K562 (cell line): ENCODE measurements at regions of chr7 and their contacts with region 1.

Region 1: GRCh38 chr7:23712368-23713284 is 2.6 kb downstream of the STK31 start:
- DNase-seq: peak; percentile 44 to 62 (median 52)
- ATAC-seq: peak; percentile 58; the same call in 2 of the 3 replicates
- H3K4me3 ChIP-seq: no peak overlapping the region
- H3K27ac ChIP-seq: no peak overlapping the region
- H3K4me1 ChIP-seq: no peaks in the 10 kb centered on the region
- H3K27me3 ChIP-seq: peaks cover 0 to 6% of the 10 kb centered on the region in 2 experiments; a peak in 2 of 5 replicates
- CTCF ChIP-seq: peak; percentile 42 to 82 (median 58); a peak in 4 of 6 replicates
- EP300 ChIP-seq: no peak
- POLR2A ChIP-seq: no peak
- RAD21 ChIP-seq: peak; percentile 92 to 94

Region 2: DNA sequence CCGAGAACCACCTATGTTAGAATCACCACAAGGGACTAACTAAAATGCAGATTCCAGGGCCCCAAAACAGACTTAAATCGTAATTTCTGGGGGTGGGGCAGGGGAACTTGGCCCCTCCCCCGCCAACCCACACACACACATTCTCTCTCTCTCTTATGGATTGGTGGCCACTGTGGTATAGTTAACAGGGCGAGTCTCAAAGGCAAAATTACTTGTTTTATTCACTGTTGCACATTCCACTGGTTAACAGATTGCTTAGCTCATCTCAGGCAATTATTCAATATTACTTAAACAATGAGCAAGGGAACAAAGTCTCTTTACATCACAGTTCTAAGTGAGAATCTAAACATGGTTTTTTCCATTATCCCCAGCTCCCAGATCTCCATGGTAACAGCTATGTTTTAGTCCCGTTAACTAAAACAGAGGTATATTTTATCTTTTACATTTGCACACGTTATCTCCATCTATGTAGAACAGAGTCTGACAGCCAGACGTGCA is 280.9 kb before region 1 on chr7:
- CTCF ChIA-PET with region 1: no interaction called
- POLR2A ChIA-PET with region 1: no interaction called
- in situ Hi-C with region 1: no loop called
- intact Hi-C with region 1: loop called (anchors 10 kb)
- DNase-seq: peak; percentile 41 to 56 (median 52)
- ATAC-seq: peak; percentile 62
- H3K4me3 ChIP-seq: no peak overlapping the region
- H3K27ac ChIP-seq: peak overlapping the region; percentile 41; the same call in 1 of the 3 replicates
- H3K4me1 ChIP-seq: peaks cover 11 to 48% of the 10 kb centered on the region in 2 experiments; a peak in 4 of 5 replicates
- H3K27me3 ChIP-seq: no peaks in the 10 kb centered on the region
- CTCF ChIP-seq: no peak
- EP300 ChIP-seq: peak; percentile 16; the same call in 1 of the 2 replicates
- POLR2A ChIP-seq: no peak
- RAD21 ChIP-seq: no peak

Region 3: DNA sequence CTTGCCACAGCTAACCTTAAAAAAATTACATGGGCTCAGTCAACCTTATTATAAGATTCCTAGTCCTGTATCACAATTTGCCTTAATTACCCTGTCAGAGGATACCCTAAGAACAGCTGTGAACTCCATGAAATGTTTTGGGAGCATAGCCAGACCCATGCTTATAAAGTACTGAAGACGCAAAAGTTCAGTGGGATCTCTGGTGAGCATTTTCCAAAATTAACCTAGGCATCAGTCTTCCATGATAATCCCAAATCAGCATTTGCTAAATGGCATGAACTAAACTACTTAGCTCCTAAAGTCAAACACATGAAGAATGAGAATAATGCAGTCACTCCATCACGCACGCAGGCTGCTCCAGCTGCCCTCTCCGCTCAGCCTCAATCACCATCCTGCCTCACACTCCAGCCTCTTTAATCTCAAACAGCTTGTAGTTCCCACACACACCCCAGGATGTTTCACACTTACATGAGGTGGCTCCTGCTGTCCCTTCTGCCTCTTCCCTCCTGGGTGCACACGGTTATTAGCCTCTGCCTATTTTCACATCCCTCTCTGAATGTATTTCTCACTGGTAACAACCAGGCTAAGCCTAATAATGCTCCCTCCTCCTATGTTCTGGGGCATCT is 257.6 kb before region 1 on chr7:
- CTCF ChIA-PET with region 1: no interaction called
- POLR2A ChIA-PET with region 1: no interaction called
- in situ Hi-C with region 1: no loop called
- intact Hi-C with region 1: no loop called
- DNase-seq: no peak
- ATAC-seq: peak; percentile 39
- H3K4me3 ChIP-seq: no peak overlapping the region
- H3K27ac ChIP-seq: no peak overlapping the region
- H3K4me1 ChIP-seq: peaks cover 0 to 2% of the 10 kb centered on the region in 2 experiments; a peak in 1 of 5 replicates
- H3K27me3 ChIP-seq: no peaks in the 10 kb centered on the region
- CTCF ChIP-seq: no peak
- EP300 ChIP-seq: no peak
- POLR2A ChIP-seq: peak; percentile 42; the same call in 1 of the 2 replicates
- RAD21 ChIP-seq: no peak

Region 4: GRCh38 chr7:23546897-23547572 is 165.6 kb before region 1 on chr7:
- CTCF ChIA-PET with region 1: interaction called, 73 read pairs
- POLR2A ChIA-PET with region 1: no interaction called
- in situ Hi-C with region 1: no loop called
- intact Hi-C with region 1: loop called (anchors 1 kb)
- DNase-seq: peak; percentile 81 to 93 (median 82)
- ATAC-seq: peak; percentile 87
- H3K4me3 ChIP-seq: no peak overlapping the region
- H3K27ac ChIP-seq: no peak overlapping the region
- H3K4me1 ChIP-seq: peaks cover 0 to 6% of the 10 kb centered on the region in 2 experiments; a peak in 2 of 5 replicates
- H3K27me3 ChIP-seq: no peaks in the 10 kb centered on the region; a peak in 1 of 5 replicates
- CTCF ChIP-seq: peak; percentile 94 to 99 (median 98)
- EP300 ChIP-seq: no peak
- POLR2A ChIP-seq: no peak
- RAD21 ChIP-seq: peak; percentile 94

Region 5: GRCh38 chr7:23570592-23571200 is 141.9 kb before region 1 on chr7:
- CTCF ChIA-PET with region 1: interaction called, 39 read pairs
- POLR2A ChIA-PET with region 1: interaction called, 3 read pairs
- in situ Hi-C with region 1: loop called (anchors 5 kb)
- intact Hi-C with region 1: loop called (anchors 1 kb)
- DNase-seq: peak; percentile 62 to 86 (median 69)
- ATAC-seq: peak; percentile 98
- H3K4me3 ChIP-seq: no peak overlapping the region
- H3K27ac ChIP-seq: no peak overlapping the region
- H3K4me1 ChIP-seq: peaks cover 0 to 5% of the 10 kb centered on the region in 2 experiments; a peak in 2 of 5 replicates
- H3K27me3 ChIP-seq: no peaks in the 10 kb centered on the region
- CTCF ChIP-seq: peak; percentile 82 to 91 (median 87)
- EP300 ChIP-seq: no peak
- POLR2A ChIP-seq: no peak
- RAD21 ChIP-seq: peak; percentile 96 to 98

Region 6: DNA sequence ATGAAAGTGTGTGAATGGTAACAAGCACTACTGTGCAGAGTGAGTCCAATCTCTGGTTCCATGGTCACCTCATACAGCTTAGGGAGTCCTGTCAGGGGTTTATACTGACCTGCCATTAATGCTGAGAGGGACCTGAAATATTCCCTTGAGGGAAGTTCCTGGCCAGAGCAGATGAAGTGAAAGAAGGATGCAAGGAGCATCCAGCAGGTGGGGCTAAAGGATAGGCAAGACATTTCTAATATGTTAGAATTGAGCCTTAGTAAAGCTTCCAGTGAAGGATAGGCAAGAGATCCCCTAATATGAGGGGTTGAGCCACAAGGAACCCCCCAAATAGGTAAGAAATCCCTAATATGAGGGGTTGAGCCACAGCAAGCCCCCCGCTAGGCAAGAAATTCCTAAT is 58.1 kb before region 1 on chr7:
- CTCF ChIA-PET with region 1: no interaction called
- POLR2A ChIA-PET with region 1: no interaction called
- in situ Hi-C with region 1: no loop called
- intact Hi-C with region 1: loop called (anchors 5 kb)
- DNase-seq: peak; percentile 16 to 57 (median 25)
- ATAC-seq: peak; percentile 69
- H3K4me3 ChIP-seq: no peak overlapping the region
- H3K27ac ChIP-seq: no peak overlapping the region
- H3K4me1 ChIP-seq: peaks cover 0 to 2% of the 10 kb centered on the region in 2 experiments; a peak in 1 of 5 replicates
- H3K27me3 ChIP-seq: peaks cover 0 to 4% of the 10 kb centered on the region in 2 experiments; a peak in 1 of 5 replicates
- CTCF ChIP-seq: peak; percentile 43 to 64 (median 61); a peak in 5 of 6 replicates
- EP300 ChIP-seq: no peak
- POLR2A ChIP-seq: no peak
- RAD21 ChIP-seq: peak; percentile 8 to 66; a peak in 2 of 4 replicates

Region 7: DNA sequence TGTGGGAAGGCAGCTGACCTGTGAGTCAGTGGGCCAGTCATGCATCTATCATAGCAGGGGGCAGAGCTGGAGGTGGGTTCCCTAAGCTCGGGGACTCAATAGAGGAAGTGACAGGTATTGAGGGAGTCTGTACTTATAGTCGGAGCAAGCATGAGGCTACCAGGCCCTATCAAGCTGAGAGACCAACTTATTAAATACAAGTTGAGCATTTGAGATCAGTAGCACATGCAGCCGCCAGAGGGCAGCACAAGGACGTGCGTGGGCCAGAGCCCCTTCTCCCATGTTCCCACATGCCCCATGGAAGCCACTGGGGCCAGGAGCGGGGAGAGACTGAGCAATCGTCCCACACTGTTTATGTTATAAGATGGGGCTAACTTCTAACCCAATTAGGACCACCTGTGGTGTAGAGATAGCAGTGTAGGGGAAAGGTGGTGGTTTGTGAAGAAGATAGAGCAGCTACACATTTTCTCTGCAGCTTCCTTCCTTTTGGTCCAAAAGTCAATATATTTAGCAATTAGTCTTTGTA is 15.6 kb before region 1 on chr7:
- CTCF ChIA-PET with region 1: interaction called, 14 read pairs
- POLR2A ChIA-PET with region 1: no interaction called
- in situ Hi-C with region 1: no loop called
- intact Hi-C with region 1: loop called (anchors 2 kb)
- DNase-seq: peak; percentile 71 to 89 (median 76)
- ATAC-seq: peak; percentile 98
- H3K4me3 ChIP-seq: no peak overlapping the region
- H3K27ac ChIP-seq: no peak overlapping the region
- H3K4me1 ChIP-seq: peaks cover 0 to 3% of the 10 kb centered on the region in 2 experiments; a peak in 1 of 5 replicates
- H3K27me3 ChIP-seq: no peaks in the 10 kb centered on the region
- CTCF ChIP-seq: peak; percentile 86 to 93 (median 93)
- EP300 ChIP-seq: peak; percentile 17; the same call in 1 of the 2 replicates
- POLR2A ChIP-seq: no peak
- RAD21 ChIP-seq: peak; percentile 74 to 94

Region 8: DNA sequence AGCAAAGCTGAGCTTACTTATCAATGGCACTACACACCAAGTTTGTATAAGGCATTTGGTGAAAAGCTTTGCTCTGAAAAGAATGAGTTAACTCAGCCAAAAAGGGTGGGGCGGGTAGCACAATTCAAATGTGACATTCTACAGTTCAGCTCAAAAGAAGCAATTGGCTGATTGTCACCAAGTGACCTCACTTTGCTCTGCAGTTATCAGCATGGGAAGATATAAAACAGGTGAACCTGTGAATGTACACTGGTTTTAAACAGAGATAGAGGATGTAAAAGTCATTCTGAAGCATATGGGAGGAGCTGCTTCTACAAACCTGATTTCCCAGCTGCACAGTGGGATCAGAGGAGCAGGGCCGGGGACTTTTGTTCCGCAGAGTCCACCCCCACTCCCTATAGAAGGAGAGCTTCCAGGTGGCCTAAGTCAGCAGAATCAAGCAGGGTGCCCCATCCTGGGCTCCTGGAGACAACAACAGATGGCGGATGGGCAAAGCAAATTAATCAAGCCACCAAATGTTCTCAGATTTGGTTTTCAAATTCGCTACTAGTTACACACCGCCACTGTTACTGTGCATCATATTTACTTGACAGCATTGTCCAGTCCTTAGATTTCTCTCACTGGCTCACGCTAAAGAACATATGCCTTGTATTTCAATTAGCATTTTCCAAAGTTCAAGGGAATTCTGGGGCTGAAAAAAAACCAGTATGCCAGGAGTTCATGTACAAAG is 1543.1 kb after region 1 on chr7:
- CTCF ChIA-PET with region 1: no interaction called
- POLR2A ChIA-PET with region 1: no interaction called
- in situ Hi-C with region 1: no loop called
- intact Hi-C with region 1: no loop called
- DNase-seq: no peak
- ATAC-seq: no peak
- H3K4me3 ChIP-seq: no peak overlapping the region
- H3K27ac ChIP-seq: no peak overlapping the region
- H3K4me1 ChIP-seq: no peaks in the 10 kb centered on the region
- H3K27me3 ChIP-seq: peaks cover 0 to 8% of the 10 kb centered on the region in 2 experiments; a peak in 1 of 5 replicates
- CTCF ChIP-seq: no peak
- EP300 ChIP-seq: no peak
- POLR2A ChIP-seq: no peak
- RAD21 ChIP-seq: no peak